ENCODE measurements at regions of chr10 and their contacts with region 1.

Region 1: DNA sequence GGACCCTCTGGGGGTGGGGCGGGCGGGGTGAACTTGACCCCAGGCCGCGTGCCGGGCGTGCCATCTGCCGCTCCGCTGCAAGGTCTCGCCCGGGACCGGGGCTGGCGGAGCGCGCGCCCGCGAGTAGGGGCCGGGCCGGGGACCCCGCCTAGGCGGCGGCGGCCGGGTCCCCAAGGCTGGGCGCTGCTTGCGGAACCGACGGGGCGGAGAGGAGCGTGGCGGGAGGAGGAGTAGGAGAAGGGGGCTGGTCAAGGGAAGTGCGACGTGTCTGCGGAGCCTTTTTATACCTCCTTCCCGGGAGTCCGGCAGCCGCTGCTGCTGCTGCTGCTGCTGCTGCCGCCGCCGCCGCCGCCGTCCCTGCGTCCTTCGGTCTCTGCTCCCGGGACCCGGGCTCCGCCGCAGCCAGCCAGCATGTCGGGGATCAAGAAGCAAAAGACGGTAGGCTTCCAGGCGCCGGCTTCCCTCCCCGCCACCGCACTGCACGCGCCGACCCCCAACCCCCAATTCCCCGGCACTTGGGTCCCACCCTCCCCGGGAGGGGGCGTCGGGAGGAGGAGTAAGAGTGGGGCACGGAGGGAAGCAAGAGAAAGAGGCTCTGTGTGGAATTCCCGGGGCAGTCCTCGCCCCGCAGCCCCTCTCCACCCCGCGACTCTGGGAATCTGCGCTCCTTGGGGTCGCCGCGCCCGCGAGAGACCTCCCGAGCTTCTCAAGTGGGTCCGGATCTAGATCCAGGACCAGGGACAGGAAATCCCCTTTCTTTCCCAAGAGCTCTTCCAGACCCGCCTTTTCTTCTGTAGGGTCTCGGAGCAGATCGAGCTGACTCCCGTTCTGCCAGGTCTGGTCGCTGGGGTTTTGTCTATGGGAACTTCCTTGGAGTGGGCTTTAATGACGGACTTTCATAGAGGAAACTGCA is at the start of gene PAPSS2:
- DNase-seq: peak; percentile 72
- H3K4me3 ChIP-seq: peak within 1 kb of the TSS; percentile 86
- H3K27ac ChIP-seq: peak within 1 kb of the TSS; percentile 86
- H3K4me1 ChIP-seq: no peaks in the 10 kb centered on the region
- H3K27me3 ChIP-seq: no peaks in the 10 kb centered on the region
- CTCF ChIP-seq: no peak
- total RNA-seq, gene PAPSS2: 279 to 310 TPM

Region 2: GRCh38 chr10:87531908-87532622 is 127.8 kb before region 1 on chr10:
- intact Hi-C with region 1: loop called (anchors 10 kb)
- DNase-seq: no peak
- H3K4me3 ChIP-seq: no peak overlapping the region
- H3K27ac ChIP-seq: peak overlapping the region; percentile 12
- H3K4me1 ChIP-seq: no peaks in the 10 kb centered on the region
- H3K27me3 ChIP-seq: no peaks in the 10 kb centered on the region
- CTCF ChIP-seq: no peak

Region 3: GRCh38 chr10:87547734-87548311 is 112.0 kb before region 1 on chr10:
- intact Hi-C with region 1: no loop called
- DNase-seq: no peak
- H3K4me3 ChIP-seq: no peak overlapping the region
- H3K27ac ChIP-seq: no peak overlapping the region
- H3K4me1 ChIP-seq: no peaks in the 10 kb centered on the region
- H3K27me3 ChIP-seq: no peaks in the 10 kb centered on the region
- CTCF ChIP-seq: no peak

Region 4: DNA sequence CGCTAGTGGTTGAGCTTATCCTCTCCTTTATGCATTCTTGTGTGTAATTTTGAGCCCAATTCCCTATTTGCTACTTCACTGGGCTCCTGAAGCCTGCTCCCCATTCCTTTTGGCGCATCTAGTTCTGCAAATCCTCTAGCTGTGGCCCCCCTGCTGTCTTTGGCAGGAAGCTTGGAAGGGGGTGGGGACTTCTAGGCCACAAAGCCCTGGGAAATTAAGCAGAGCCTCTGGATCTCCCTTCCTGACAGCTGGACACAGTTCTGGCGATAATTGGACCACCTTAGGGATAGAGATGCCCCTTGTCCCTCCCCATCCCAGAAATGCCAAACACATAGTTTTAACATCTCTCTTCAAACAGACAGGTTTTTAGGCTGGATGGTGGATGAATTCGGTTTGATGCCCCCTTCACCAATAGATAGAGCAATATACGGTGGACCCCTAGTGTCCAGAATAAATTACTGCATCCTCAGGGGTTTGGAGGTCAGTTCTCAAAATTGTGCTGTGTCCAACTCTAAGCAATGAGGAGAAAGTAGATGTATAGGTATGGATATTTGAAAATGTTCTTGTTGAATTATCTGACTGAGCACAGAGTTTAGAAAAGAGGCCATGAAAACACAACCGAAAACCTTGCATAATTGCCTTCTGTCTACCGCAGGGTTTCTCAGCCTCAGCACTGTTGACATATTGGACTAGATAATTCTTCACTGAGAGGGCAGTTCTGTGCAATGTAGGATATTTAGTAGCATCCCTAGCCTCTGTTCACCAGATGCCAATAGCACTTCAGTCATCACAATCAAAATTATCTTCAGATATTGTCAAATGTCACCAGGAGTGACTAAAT is 75.4 kb after region 1 on chr10:
- intact Hi-C with region 1: loop called (anchors 2 kb)
- DNase-seq: no peak
- H3K4me3 ChIP-seq: no peak overlapping the region
- H3K27ac ChIP-seq: no peak overlapping the region
- H3K4me1 ChIP-seq: no peaks in the 10 kb centered on the region
- H3K27me3 ChIP-seq: peaks cover 4% of the 10 kb centered on the region
- CTCF ChIP-seq: peak; percentile 75

Region 5: DNA sequence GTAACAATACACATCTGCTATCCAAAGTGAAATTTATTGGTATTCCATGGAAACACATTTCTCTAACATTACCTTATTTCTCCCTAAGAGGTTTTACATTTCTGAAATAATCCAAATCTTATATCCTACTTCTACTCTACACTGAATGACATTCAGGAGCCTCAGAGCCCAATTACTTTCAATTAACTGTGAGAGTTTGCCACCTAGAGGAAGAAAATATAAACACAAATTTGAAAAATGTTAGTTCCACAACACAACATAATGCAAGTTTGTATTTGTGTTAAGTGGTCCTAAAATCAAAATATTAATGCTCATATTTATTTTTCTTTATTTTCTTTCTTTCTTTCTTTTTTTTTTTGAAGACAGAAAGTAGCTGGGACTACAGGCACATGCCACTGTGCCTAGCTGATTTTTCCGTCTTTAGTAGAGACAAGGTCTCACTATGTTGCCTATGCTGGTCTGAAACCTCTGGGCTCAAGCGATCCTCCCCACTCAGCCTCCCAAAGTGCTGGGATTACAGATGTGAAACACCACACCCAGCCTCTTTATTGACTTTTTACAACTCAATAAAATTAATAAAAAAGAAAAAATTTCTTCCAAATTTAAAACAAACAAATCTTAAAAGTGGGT is 112.2 kb after region 1 on chr10:
- intact Hi-C with region 1: loop called (anchors 5 kb)
- DNase-seq: no peak
- H3K4me3 ChIP-seq: no peak overlapping the region
- H3K27ac ChIP-seq: no peak overlapping the region
- H3K4me1 ChIP-seq: no peaks in the 10 kb centered on the region
- H3K27me3 ChIP-seq: no peaks in the 10 kb centered on the region
- CTCF ChIP-seq: peak; percentile 53